Heart right ventricle (tissue), 16 donors: ENCODE measurements at regions of chr5 and their contacts with region 1.

Region 1: DNA sequence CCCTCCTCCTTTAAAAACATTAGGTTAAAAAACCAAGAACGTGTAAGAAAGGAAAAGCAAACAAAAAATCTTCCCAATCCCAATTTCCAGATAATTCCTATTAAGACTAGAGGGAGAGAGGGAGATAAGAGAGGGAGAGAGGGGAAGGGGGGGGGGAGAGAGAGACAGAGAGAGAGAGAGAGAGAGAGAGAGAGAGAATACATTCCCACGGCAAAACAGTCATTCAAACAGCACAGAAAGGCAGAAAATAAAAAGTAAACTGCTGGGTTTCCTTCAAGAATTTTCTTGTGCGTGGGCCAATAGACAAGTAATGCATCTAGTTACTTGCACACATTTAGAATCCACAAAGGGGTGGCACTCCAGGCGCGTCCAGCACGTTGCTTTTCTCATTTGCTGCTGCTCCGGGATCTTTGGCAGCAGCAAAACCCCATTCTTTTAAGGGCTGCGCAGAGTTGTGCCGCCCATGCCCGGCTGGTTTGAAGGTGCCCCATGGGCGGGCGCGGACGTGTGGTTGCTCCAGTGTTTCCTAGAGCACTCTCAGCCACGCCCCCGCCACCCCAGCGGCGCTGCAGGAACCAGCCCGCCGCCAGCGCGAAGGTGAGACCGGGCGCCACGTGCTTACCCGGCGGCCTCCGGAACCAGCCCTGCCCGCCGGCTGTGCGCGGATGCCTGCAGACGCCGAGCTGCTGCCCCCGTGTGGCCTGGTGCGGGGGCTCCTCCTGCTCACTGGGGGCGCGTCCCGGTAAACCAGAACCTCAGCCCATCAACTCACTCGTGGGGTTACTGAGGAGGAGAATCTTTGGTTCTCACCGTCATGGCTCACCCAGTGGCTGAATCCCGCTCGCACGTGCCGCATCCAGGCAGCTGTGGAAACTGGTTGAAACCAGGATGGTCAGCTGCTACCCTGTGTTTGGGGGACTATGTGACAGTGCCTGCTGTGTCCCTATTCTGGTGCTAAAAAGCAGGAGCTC is 44.6 kb downstream of the STC2 start:
- DNase-seq: peak; percentile 73 to 84
- ATAC-seq: peak; percentile 85 to 91 (median 88)
- H3K4me3 ChIP-seq: peak overlapping the region in 8 of 10 donors; percentile 9 to 45 (median 34)
- H3K27ac ChIP-seq: peak overlapping the region in 7 of 10 donors; percentile 21 to 77 (median 42)
- H3K4me1 ChIP-seq: peaks cover 0 to 34% (median 7%) of the 10 kb centered on the region in 9 donors
- H3K27me3 ChIP-seq: peaks cover 0 to 73% (median 30%) of the 10 kb centered on the region in 7 donors
- CTCF ChIP-seq: peak; percentile 64 to 85 (median 76)

Region 2: GRCh38 chr5:172714491-172715421 is 568.8 kb before region 1 on chr5:
- intact Hi-C with region 1: loop called in 5 of 10 experiments (anchors 5 to 10 kb)
- DNase-seq: peak; percentile 76 to 84
- ATAC-seq: peak; percentile 45 to 81 (median 78)
- H3K4me3 ChIP-seq: no peak overlapping the region
- H3K27ac ChIP-seq: peak overlapping the region; percentile 66 to 91 (median 83)
- H3K4me1 ChIP-seq: peaks cover 16 to 53% (median 41%) of the 10 kb centered on the region in 9 donors
- H3K27me3 ChIP-seq: peaks cover 0 to 5% (median 0%) of the 10 kb centered on the region in 7 donors
- CTCF ChIP-seq: peak; percentile 80 to 93 (median 86)

Region 3: DNA sequence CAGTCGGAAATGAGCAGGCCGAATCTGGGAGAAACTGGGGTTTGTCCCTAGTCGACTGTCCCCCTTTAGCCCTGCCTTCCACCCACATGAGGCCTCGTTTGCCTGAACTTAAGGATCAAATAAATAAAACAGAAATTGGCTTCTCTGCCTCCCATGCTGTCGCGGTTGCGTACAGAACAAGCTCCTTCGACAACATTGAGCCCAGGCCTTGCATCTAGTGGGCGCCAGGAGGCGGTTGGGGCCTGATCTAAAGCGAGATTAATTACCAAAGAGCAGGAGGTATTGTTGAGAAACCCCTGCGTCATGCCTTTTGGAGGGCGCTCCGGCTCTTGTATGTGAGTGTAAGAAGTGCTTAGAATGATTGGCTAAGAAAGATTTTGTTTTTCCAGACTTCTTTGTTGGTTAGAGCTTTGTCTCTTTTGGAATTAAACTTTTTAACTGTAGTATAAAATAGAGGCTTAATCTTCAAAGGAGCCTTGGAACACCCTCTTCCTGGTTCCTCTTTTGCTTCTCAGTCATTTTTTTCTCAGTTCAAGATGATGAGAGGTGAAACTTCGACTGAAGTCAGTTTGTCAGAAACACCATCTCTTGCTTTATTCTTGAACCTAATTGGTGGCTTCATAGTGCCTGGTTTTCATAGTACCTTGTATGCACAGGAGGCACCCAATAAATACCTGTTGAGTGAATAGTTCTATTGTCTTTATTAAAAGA is 299.2 kb before region 1 on chr5:
- intact Hi-C with region 1: loop called in 7 of 10 experiments (anchors 2 to 10 kb)
- DNase-seq: peak; percentile 46 to 50
- ATAC-seq: peak; percentile 50 to 77 (median 66)
- H3K4me3 ChIP-seq: peak overlapping the region; percentile 65 to 95 (median 88)
- H3K27ac ChIP-seq: peak overlapping the region; percentile 86 to 95 (median 92)
- H3K4me1 ChIP-seq: peaks cover 0 to 43% (median 17%) of the 10 kb centered on the region in 9 donors
- H3K27me3 ChIP-seq: no peaks in the 10 kb centered on the region
- CTCF ChIP-seq: peak in 8 of 9 donors; percentile 18 to 56 (median 35)

Region 4: DNA sequence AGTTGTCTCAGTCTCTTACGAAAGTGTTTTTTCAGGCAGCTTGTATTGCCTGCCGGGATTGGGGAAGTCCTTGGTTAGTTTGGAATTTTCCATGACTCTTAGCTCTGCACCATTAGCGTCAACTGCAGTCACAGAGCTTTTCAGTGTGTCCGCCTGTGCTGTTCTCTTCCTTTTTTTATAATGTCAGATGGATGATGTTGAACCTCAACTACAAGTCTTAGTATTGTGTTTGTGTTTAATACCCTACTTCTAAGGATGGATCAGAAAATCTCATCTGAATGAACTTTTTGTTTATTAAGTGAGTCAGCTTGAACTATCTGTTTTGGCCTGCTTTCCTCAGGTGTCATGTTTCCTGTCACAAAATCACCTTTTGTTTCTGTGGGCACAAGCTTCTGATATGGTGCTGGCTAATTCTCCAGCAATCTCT is 267.0 kb before region 1 on chr5:
- intact Hi-C with region 1: loop called in 1 of 10 experiments (anchors 10 kb)
- DNase-seq: peak in 1 of 2 donors; percentile 42
- ATAC-seq: peak; percentile 63 to 92 (median 87)
- H3K4me3 ChIP-seq: no peak overlapping the region
- H3K27ac ChIP-seq: peak overlapping the region; percentile 3 to 90 (median 72)
- H3K4me1 ChIP-seq: peaks cover 2 to 95% (median 33%) of the 10 kb centered on the region in 9 donors
- H3K27me3 ChIP-seq: no peaks in the 10 kb centered on the region
- CTCF ChIP-seq: no peak

Region 5: DNA sequence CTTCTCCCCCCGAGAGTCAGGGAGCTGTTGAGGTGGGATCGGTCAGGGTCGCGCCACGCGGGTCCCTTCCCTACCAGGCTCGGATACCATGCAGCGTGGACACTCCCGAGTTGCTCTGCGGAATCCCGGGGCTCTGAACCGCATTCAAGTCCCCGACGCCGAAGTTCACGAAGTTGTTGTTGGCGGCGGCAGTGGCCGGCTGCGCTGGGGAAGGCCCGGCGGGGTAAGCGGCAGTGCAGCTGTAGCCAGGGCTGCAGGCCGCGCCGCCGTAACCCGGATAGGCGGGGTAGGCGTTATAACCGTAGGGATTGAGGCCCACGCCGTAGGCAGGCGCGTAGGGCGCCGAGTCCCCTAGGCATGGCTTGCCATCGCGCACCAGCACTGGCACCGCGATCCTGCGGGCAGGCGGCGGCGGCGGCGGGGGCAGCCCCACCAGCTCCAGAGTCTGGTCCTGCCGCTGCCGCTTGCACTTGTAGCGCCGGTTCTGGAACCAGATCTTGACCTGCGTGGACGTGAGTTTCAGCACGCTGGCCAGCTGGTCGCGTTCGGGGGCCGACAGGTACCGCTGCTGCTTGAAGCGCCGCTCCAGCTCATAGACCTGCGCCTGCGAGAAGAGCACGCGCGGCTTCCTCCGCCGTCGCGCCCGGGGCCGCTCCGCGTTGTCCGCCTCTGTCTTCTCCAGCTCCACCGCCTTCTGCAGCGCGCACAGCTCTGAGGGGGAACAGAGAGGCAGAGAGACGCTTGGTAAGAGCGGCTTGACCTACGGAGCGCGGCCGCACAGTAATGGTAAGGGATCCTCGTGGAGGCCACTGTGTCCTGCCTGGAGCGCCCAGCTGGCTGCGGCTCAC is 50.9 kb before region 1 on chr5:
- intact Hi-C with region 1: loop called in 3 of 10 experiments (anchors 1 to 5 kb)
- DNase-seq: peak in 1 of 2 donors; percentile 23
- ATAC-seq: no peak
- H3K4me3 ChIP-seq: peak overlapping the region; percentile 44 to 73 (median 62)
- H3K27ac ChIP-seq: peak overlapping the region; percentile 19 to 95 (median 88)
- H3K4me1 ChIP-seq: peaks cover 12 to 66% (median 40%) of the 10 kb centered on the region in 9 donors
- H3K27me3 ChIP-seq: peaks cover 25 to 100% (median 96%) of the 10 kb centered on the region in 7 donors
- CTCF ChIP-seq: no peak